Head of caudate nucleus (tissue), 42 donors: ENCODE measurements at regions of chr17 and their contacts with region 1.

Region 1: DNA sequence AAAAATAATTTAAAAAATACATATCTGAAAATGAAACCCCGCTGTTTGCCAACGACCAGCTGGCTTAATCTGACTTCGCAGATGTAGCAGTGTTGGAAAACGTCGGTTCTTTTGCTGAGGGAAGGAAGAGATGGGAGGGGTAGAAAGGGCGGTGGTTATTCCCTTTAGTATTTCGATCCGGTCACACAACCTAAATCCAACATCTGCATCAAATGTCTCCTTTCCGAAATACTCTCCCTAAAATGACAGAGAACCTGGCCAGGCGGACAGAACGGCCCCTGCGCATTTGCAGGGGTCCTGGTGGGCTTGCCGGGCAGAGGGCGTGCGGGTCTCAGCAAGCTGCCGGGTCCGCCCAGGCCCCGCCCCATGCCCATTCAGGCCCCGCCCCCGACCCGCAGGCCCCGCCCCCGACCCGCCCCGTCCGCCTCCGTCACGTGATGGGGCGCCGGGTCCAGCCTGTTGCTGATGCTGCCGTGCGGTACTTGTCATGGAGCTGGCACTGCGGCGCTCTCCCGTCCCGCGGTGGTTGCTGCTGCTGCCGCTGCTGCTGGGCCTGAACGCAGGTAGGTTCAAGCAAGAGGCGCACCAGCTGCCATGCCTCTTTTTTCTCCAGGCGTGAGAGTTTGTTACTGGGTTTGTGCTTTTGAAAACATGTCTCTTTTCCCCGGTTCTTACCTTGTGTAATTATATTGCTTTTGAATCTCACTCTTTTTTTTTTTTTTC is at the start of gene SCPEP1:
- DNase-seq: peak; percentile 81 to 96 (median 90)

Region 2: GRCh38 chr17:57033295-57033694 is 55.5 kb after region 1 on chr17:
- intact Hi-C with region 1: no loop called
- DNase-seq: no peak

Region 3: DNA sequence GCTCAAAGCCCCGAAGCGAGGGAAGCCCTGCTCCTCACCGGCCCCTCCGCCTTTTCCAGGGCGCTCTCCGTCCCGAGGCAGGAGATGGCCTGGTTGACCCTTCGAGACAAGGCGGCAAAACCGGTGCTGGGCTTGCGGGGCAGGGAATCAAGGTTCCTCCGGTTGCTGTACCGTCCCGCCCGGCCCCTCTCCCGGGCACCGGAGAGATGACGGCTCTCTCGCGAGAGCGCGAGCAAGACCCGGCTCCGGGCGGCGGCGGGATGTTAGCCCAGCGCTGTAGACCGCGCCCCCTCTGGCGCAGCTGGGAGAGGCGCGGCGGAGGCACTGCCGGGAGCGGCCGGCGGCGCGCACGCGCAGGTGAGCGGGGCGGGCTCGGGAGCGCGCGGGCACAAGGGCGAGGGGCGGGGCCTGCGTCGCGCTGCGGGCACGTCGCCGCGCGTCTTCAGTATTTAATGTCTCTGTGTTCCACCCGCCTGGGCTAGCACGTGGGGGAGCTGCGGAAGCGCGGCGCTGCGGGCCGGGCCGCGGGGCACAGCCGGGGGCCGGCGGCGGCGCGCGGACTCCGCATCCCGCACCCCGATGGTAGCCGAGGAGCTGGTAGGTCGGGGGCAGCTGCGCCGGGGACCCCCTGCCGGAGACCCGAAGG is 107.1 kb after region 1 on chr17 and contains the start of gene AKAP1:
- intact Hi-C with region 1: loop called (anchors 10 kb)
- DNase-seq: peak; percentile 84 to 98 (median 95)